ENCODE measurements at regions of chrX and their contacts with region 1.

Region 1: GRCh38 chrX:109709129-109709631 is 23.9 kb downstream of the ACSL4 start:
- ATAC-seq: no peak
- H3K4me3 ChIP-seq: no peak overlapping the region
- H3K27ac ChIP-seq: no peak overlapping the region
- H3K4me1 ChIP-seq: no peaks in the 10 kb centered on the region

Region 2: GRCh38 chrX:109856974-109857373 is 147.8 kb after region 1 on chrX:
- in situ Hi-C with region 1: loop called in 1 of 9 experiments (anchors 25 kb)
- ATAC-seq: no peak
- H3K4me3 ChIP-seq: no peak overlapping the region
- H3K27ac ChIP-seq: no peak overlapping the region
- H3K4me1 ChIP-seq: no peaks in the 10 kb centered on the region

Region 3: GRCh38 chrX:109890895-109891502 is 181.8 kb after region 1 on chrX:
- in situ Hi-C with region 1: loop called in 1 of 9 experiments (anchors 25 kb)
- ATAC-seq: peak; percentile 23 to 76 (median 57)
- H3K4me3 ChIP-seq: no peak overlapping the region
- H3K27ac ChIP-seq: no peak overlapping the region
- H3K4me1 ChIP-seq: no peaks in the 10 kb centered on the region

Measured in motor neuron (in vitro differentiated cells).